ENCODE measurements at regions of chr10 and their contacts with region 1.

Region 1: DNA sequence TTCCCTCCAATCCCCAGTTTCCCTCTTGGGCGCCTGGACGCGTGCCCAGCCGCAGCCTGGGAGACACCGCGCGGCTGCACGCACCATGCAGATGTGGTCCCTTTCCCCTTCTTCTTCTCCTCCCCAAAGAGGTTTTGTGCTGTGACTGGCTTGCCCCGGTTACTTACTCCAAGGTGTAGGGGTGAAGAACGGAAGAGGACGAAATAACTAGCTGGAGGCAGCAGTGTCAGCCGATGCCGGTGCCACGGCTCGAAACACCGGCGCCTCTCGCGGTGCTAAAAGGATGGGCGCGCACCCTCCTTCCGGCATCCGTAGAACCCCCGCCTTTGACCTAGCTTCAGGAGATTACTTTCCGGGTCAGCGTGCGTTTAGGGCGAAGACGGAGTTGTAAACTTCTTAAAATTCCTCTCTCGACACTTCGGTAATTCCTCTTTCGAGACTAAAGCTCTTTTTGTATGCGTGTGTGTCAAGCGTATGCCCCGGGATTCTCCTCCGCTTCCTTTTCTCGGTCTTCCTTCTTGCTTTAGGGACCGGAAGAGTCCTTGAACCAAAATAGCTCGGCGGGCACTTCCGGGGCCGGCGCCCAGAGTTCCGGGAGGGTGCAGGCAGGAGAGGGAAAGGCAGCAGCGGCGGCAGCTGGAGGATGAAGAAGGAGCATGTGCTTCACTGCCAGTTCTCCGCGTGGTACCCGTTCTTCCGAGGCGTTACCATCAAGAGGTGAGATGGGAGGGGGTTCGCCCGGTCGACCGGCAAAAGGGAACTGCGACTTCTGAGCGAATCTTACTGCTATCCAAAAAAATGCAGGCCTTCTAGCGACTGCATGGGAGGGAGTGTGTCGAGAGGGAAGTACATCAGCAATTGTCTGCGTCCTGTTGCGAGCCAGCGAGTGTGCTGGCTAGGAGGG is at the starts of genes CDC123 and NUDT5:
- DNase-seq: peak; percentile 92
- H3K4me3 ChIP-seq: peak within 1 kb of the TSS; percentile 94
- H3K27ac ChIP-seq: peak within 1 kb of the TSS; percentile 91
- H3K4me1 ChIP-seq: peaks cover 5% of the 10 kb centered on the region
- H3K27me3 ChIP-seq: no peaks in the 10 kb centered on the region
- CTCF ChIP-seq: no peak
- total RNA-seq, gene CDC123: 47.9 to 84.5 TPM
- total RNA-seq, gene NUDT5: 41.4 to 89.0 TPM

Region 2: GRCh38 chr10:11993834-11994468 is 201.9 kb before region 1 on chr10:
- intact Hi-C with region 1: loop called (anchors 5 kb)
- DNase-seq: no peak
- H3K4me3 ChIP-seq: no peak overlapping the region
- H3K27ac ChIP-seq: no peak overlapping the region
- H3K4me1 ChIP-seq: no peaks in the 10 kb centered on the region
- H3K27me3 ChIP-seq: no peaks in the 10 kb centered on the region
- CTCF ChIP-seq: no peak

Region 3: GRCh38 chr10:12213621-12214020 is 17.8 kb after region 1 on chr10:
- intact Hi-C with region 1: loop called (anchors 2 kb)
- DNase-seq: no peak
- H3K4me3 ChIP-seq: no peak overlapping the region
- H3K27ac ChIP-seq: no peak overlapping the region
- H3K4me1 ChIP-seq: peaks cover 3% of the 10 kb centered on the region
- H3K27me3 ChIP-seq: no peaks in the 10 kb centered on the region
- CTCF ChIP-seq: no peak

Region 4: GRCh38 chr10:12348870-12349628 is 153.2 kb after region 1 on chr10 and contains the start of gene CAMK1D:
- intact Hi-C with region 1: no loop called
- DNase-seq: peak; percentile 84
- H3K4me3 ChIP-seq: peak within 1 kb of the TSS; percentile 85
- H3K27ac ChIP-seq: peak within 1 kb of the TSS; percentile 71
- H3K4me1 ChIP-seq: peaks cover 7% of the 10 kb centered on the region
- H3K27me3 ChIP-seq: no peaks in the 10 kb centered on the region
- CTCF ChIP-seq: peak; percentile 10
- total RNA-seq, gene CAMK1D: 21.3 to 29.7 TPM